ENCODE measurements at regions of chr17 and their contacts with region 1.

Region 1: DNA sequence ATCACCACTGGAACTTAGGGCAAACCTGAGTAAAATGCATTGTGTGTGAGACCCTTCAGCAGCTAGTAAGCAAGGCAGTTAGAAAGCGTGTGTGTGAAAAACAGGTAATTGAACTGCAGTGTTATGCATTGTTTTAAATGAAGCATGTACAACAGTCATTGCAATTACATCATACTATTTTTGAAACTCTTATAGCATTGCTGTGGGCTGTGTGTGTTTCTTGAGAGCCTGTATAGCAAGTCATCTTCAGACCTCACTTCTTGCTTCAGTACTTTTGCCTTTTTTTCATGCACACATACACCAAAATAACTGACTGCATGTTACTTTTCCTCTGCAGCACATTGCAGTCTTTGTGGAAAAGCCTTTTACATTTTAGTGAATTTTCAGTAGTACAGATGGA is 19.2 kb downstream of the PTRH2 start:
- DNase-seq: no peak
- H3K4me3 ChIP-seq: no peak overlapping the region
- H3K27ac ChIP-seq: no peak overlapping the region
- H3K4me1 ChIP-seq: no peaks in the 10 kb centered on the region
- CTCF ChIP-seq: no peak

Region 2: GRCh38 chr17:59651346-59651745 is 36.7 kb before region 1 on chr17:
- CTCF ChIA-PET with region 1: no interaction called
- POLR2A ChIA-PET with region 1: no interaction called
- intact Hi-C with region 1: loop called (anchors 5 kb)
- DNase-seq: no peak
- H3K4me3 ChIP-seq: no peak overlapping the region
- H3K27ac ChIP-seq: no peak overlapping the region
- H3K4me1 ChIP-seq: no peaks in the 10 kb centered on the region
- CTCF ChIP-seq: no peak

Region 3: DNA sequence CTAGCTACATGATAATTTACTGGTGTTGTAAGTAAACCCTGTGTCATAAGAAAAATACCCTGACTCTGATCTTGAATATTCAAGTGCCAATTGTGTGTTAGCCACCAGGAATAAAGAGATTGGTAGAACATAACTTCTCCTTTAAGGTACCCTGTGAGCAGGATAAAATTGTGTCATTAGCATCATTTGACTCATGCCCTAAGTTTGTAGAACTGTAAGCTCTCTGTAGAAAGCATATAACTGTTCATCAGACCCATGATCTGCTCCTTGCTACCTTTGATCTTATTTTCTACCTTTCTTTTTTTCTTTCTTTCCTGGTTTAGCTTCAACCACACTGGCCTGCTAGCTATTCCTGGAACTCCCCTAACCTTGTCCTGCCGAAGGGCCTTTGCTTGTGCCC is 16.6 kb before region 1 on chr17:
- CTCF ChIA-PET with region 1: no interaction called
- POLR2A ChIA-PET with region 1: interaction called, 16 read pairs
- intact Hi-C with region 1: no loop called
- DNase-seq: no peak
- H3K4me3 ChIP-seq: no peak overlapping the region
- H3K27ac ChIP-seq: no peak overlapping the region
- H3K4me1 ChIP-seq: no peaks in the 10 kb centered on the region
- CTCF ChIP-seq: no peak

Region 4: GRCh38 chr17:59804901-59805465 is 117.0 kb after region 1 on chr17:
- CTCF ChIA-PET with region 1: no interaction called
- POLR2A ChIA-PET with region 1: no interaction called
- intact Hi-C with region 1: no loop called
- DNase-seq: no peak
- H3K4me3 ChIP-seq: peak overlapping the region; percentile 35
- H3K27ac ChIP-seq: peak overlapping the region; percentile 0
- H3K4me1 ChIP-seq: peaks cover 22% of the 10 kb centered on the region
- CTCF ChIP-seq: no peak

Measured in OCI-LY7 (cell line).